ENCODE measurements at regions of chr19 and their contacts with region 1.

Region 1: DNA sequence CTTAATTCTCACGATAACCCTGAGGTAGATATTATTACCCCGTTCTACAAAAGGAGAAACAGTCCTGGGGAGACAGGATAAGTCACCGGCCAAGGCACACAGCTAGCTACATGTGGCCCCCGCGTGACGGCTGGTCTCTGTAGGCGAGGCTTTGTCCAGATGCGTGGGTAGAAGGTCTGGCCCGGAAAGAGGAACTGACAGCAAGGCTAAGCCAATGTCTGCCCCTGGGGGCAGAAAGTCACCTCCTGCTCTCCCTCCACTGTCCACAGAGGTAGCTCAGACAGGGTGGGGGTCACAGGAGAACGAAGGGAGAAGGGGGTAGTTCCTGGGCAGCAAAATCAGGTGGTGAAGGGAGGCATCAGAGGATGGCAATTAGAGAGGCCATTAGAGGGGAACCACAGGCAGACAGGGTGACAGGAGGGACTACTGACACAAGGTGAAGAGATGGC is 1.8 kb downstream of the APOC4 start:
- DNase-seq: peak in 2 of 3 donors; percentile 72 to 76
- ATAC-seq: peak; percentile 36 to 40
- H3K4me3 ChIP-seq: no peak overlapping the region
- H3K27ac ChIP-seq: no peak overlapping the region
- H3K4me1 ChIP-seq: peaks cover 1% of the 10 kb centered on the region
- H3K27me3 ChIP-seq: no peaks in the 10 kb centered on the region

Region 2: GRCh38 chr19:44912854-44913253 is 31.0 kb before region 1 on chr19:
- intact Hi-C with region 1: loop called in 2 of 4 experiments (anchors 5 kb)
- DNase-seq: peak in 2 of 3 donors; percentile 65 to 87
- ATAC-seq: peak in 1 of 2 donors; percentile 28
- H3K4me3 ChIP-seq: no peak overlapping the region
- H3K27ac ChIP-seq: no peak overlapping the region
- H3K4me1 ChIP-seq: no peaks in the 10 kb centered on the region
- H3K27me3 ChIP-seq: no peaks in the 10 kb centered on the region